ENCODE measurements at regions of chr3 and their contacts with region 1.

Region 1: DNA sequence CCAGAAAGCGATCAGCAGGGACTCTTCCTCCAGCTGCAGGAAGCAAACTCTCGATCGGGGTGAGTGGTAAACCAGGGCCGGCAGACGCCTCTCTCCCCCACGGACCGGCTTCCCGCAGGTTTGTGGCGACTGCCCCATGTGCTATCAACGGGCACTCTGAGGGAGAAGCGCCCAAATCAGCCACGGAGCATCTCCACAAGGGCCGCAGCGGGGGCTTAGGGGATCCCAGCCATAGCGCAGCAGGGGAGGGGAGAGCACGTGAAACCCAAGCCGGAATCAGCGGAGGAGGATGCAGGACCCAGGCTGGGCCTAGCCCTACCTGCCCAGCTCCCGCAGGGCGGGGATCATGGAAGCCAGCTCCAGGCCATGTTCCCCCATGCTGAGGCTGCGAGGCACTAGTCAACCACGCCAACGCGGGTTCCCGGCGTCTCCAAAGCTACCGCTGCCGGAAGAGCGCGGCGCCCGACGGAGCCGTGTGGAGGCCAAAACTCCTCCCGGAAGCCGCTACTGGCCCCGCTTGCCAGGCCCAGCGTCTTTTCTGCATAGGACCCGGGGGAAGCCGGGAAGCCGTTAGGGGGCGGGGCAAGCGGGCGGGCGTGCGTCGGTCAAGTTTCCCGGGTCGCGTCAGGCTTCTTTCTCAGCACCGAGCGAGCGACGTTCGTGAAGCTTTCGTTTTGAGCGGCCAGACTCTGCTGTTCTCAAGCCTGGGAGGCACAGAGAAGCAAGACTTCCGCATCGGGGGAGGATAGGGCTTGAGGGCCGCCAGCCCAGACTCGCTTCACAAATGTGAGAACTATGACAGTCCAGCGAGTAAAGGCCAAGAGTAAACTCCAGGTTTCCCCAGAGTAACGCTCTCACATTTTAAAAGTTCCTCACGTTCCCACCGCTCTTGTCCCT is at the start of gene ATR:
- DNase-seq: peak; percentile 92
- ATAC-seq: peak; percentile 95
- H3K4me3 Mint-ChIP-seq: peak within 1 kb of the TSS; percentile 96
- H3K27ac Mint-ChIP-seq: peak within 1 kb of the TSS; percentile 97
- H3K4me1 Mint-ChIP-seq: peaks cover 48% of the 10 kb centered on the region
- H3K27me3 Mint-ChIP-seq: peaks cover 5% of the 10 kb centered on the region
- CTCF ChIP-seq: no peak
- total RNA-seq, gene ATR: 47.4 and 47.6 TPM in 2 replicates

Region 2: GRCh38 chr3:142148792-142149672 is 429.5 kb before region 1 on chr3 and contains the start of gene TFDP2:
- CTCF ChIA-PET with region 1: no interaction called
- POLR2A ChIA-PET with region 1: interaction called, 4 read pairs
- intact Hi-C with region 1: loop called (anchors 10 kb)
- DNase-seq: peak; percentile 78
- ATAC-seq: peak; percentile 99
- H3K4me3 Mint-ChIP-seq: peak within 1 kb of the TSS; percentile 86
- H3K27ac Mint-ChIP-seq: peak within 1 kb of the TSS; percentile 72
- H3K4me1 Mint-ChIP-seq: peaks cover 14% of the 10 kb centered on the region
- H3K27me3 Mint-ChIP-seq: no peaks in the 10 kb centered on the region
- CTCF ChIP-seq: no peak
- total RNA-seq, gene TFDP2: 20.0 and 23.1 TPM in 2 replicates

Region 3: DNA sequence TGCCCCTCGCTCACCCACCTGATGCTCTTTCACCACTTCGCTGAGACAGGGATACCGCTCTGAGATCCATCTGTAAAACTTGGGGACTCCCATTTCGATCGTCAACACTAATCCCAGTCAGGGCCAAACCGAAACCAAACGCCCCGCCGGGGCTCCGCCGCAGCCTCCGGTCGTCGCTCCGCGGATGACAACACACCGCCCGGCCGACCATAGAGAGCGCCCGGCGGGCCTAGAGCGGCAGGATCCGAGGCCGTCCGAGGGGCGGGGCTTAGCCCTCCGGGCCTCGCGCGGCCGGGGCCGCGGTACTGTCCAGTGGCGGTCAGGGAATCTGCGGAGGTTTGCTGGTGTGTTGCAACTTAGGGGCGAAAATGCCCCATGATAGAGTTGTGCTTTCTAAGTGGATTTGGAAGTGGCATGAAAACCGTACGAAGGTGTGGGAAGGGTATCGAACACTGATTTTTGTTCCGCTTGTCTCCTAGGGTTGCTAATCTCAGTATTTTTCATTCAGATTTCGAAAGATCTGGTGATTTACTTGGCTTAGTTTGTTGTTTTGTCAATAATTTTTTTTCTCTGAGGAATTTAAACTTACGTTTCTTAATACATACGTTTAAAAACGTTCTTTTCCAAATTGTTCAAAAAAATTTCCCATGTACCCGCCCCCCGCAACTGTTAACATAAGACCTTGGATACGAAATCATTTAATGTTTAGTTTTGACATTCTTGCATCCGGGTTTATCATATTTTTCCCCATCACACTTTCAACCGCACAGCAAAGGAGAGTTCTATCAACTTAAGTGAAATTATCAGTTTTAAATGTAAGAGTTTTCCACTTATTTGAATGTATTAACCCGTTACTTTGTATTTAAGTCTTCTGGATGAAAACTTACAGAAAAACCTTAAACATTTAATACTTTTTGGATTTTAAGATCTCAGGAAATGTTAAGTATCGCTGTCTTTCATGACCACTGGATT is 130.4 kb before region 1 on chr3 and contains the start of gene XRN1:
- CTCF ChIA-PET with region 1: no interaction called
- POLR2A ChIA-PET with region 1: interaction called, 7 read pairs
- intact Hi-C with region 1: loop called (anchors 1 kb)
- DNase-seq: peak; percentile 96
- ATAC-seq: peak; percentile 97
- H3K4me3 Mint-ChIP-seq: peak within 1 kb of the TSS; percentile 97
- H3K27ac Mint-ChIP-seq: peak within 1 kb of the TSS; percentile 98
- H3K4me1 Mint-ChIP-seq: peaks cover 44% of the 10 kb centered on the region
- H3K27me3 Mint-ChIP-seq: no peaks in the 10 kb centered on the region
- CTCF ChIP-seq: no peak
- total RNA-seq, gene XRN1: 55.0 and 63.0 TPM in 2 replicates

Region 4: GRCh38 chr3:142613491-142613890 is 34.9 kb after region 1 on chr3:
- CTCF ChIA-PET with region 1: no interaction called
- POLR2A ChIA-PET with region 1: no interaction called
- intact Hi-C with region 1: no loop called
- DNase-seq: no peak
- ATAC-seq: no peak
- H3K4me3 Mint-ChIP-seq: no peak overlapping the region
- H3K27ac Mint-ChIP-seq: no peak overlapping the region
- H3K4me1 Mint-ChIP-seq: no peaks in the 10 kb centered on the region
- H3K27me3 Mint-ChIP-seq: no peaks in the 10 kb centered on the region
- CTCF ChIP-seq: no peak

Region 5: GRCh38 chr3:142723968-142724681 is 145.6 kb after region 1 on chr3 and contains the start of gene TRPC1:
- CTCF ChIA-PET with region 1: no interaction called
- POLR2A ChIA-PET with region 1: interaction called, 9 read pairs
- intact Hi-C with region 1: loop called (anchors 2 kb)
- DNase-seq: peak; percentile 54
- ATAC-seq: peak; percentile 95
- H3K4me3 Mint-ChIP-seq: peak within 1 kb of the TSS; percentile 87
- H3K27ac Mint-ChIP-seq: peak within 1 kb of the TSS; percentile 76
- H3K4me1 Mint-ChIP-seq: peaks cover 5% of the 10 kb centered on the region
- H3K27me3 Mint-ChIP-seq: peaks cover 22% of the 10 kb centered on the region
- CTCF ChIP-seq: no peak
- total RNA-seq, gene TRPC1: 1.2 and 1.3 TPM in 2 replicates

Measured in activated B cell treated with CpG ODN at 0.5 μM for 24 hours (primary cell).